Activated CD8-positive, alpha-beta memory T cell treated with anti-CD3 and anti-CD28 coated beads, Interleukin-2, amount 10 ng/mL, durations not matched to agents 7 days and 5 days (primary cell): ENCODE measurements at regions of chr12 and their contacts with region 1.

Region 1: DNA sequence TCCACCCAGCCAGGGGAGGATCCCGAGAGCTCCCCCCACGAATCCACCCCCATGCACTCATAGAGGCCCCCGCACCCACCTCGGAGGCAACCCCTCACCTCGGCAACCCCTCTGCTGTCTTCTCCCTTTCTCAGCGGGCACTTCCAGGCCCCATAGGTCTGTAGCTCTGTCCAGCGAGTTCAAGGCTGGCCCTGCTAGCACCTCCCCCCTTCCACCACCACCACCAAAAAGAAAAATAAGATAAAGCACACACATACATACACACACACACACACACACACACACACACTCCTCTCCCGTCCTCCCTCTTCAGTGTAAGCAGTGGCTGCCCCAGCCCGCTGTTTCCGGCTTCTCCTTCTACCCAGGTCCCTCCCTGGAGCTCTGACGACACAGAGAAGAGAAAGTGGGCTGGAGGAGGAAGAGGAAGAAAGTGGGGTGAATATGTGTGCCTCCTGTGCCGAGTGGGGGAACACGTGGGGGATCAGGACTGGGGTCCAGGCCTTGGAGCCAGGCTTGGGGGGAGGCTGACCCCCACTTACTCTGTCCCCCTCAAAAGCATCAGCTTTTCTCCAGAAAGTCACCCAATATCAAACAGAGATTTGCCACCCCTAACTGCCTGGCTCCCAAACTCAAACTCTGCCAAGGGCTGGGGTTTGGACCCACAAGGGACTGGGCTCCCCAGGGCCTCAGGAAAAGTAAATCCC is at the start of gene STAT6:
- DNase-seq: peak; percentile 95
- ATAC-seq: peak; percentile 76
- H3K4me3 Mint-ChIP-seq: peak within 1 kb of the TSS; percentile 95
- H3K27ac Mint-ChIP-seq: peak within 1 kb of the TSS; percentile 96
- H3K4me1 Mint-ChIP-seq: peaks cover 29% of the 10 kb centered on the region
- H3K27me3 Mint-ChIP-seq: no peaks in the 10 kb centered on the region
- total RNA-seq, gene STAT6: 99.1 to 104 TPM

Region 2: DNA sequence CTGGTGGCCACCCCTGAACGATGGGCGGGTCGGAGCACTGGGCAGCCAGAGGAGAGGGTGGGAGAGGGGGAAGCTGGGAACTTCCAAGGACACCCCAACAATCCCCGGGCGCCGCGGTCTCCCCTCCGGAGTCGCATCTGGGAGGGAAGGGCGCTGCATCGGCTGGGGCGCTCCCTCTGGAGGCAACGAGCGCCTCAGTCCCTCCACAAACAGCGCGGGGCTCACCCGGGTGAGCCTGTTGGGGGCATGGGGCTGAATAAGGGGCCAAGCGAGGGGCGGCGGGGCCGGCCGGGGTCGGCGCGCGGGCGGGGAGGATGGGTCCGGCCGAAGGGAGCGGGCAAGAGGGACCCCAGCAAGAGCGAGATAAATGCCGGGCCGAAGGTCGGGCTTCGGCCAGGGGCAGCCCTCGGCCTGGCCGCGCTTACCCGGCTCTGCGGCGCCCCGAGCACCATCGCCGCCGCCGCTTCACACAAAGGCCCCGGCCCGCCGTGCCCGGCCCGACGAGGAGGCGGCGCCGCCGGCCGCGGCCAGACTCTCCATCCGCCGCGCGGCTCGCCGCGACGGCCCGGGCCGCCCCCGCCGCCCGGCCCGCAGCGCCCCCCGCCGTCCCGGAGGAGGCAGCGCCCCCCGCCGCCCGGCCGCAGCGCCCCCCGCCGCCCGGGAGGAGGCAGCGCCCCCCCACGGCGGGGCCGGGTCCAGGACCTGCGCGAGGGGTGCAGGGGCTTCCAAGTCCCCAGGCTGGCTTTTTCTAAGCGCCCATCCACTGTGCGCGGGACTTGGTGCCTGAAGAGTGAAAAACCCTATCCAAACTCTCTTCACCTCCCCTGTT is 105.0 kb before region 1 on chr12 and contains the start of gene ZBTB39:
- CTCF ChIA-PET with region 1: interaction called, 86 read pairs
- DNase-seq: peak; percentile 70
- ATAC-seq: peak; percentile 82
- H3K4me3 Mint-ChIP-seq: peak within 1 kb of the TSS; percentile 81
- H3K27ac Mint-ChIP-seq: peak within 1 kb of the TSS; percentile 82
- H3K4me1 Mint-ChIP-seq: peaks cover 34% of the 10 kb centered on the region
- H3K27me3 Mint-ChIP-seq: no peaks in the 10 kb centered on the region
- total RNA-seq, gene ZBTB39: 8.8 to 9.3 TPM

Region 3: DNA sequence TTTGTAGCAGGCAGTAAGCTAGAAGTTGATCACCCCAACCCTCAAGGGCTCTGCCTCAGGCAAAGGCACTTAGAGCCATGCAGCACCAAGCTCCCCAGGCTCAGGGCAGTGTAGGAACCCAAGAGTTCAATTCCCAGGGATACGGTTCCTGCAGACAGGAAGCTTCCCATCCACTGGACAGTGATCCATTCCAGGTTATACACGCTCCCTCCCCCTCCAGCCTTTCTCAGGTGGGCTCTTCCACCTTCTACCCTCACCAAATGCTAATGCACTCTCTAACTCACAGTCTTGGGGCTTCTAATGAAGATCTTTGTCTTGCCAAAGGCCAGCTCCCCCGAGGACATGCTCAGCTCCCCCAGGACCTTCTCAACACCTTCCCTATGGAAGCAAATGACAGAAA is 73.9 kb before region 1 on chr12:
- CTCF ChIA-PET with region 1: interaction called, 34 read pairs
- DNase-seq: no peak
- ATAC-seq: no peak
- H3K4me3 Mint-ChIP-seq: no peak overlapping the region
- H3K27ac Mint-ChIP-seq: no peak overlapping the region
- H3K4me1 Mint-ChIP-seq: no peaks in the 10 kb centered on the region
- H3K27me3 Mint-ChIP-seq: peaks cover 3% of the 10 kb centered on the region

Region 4: DNA sequence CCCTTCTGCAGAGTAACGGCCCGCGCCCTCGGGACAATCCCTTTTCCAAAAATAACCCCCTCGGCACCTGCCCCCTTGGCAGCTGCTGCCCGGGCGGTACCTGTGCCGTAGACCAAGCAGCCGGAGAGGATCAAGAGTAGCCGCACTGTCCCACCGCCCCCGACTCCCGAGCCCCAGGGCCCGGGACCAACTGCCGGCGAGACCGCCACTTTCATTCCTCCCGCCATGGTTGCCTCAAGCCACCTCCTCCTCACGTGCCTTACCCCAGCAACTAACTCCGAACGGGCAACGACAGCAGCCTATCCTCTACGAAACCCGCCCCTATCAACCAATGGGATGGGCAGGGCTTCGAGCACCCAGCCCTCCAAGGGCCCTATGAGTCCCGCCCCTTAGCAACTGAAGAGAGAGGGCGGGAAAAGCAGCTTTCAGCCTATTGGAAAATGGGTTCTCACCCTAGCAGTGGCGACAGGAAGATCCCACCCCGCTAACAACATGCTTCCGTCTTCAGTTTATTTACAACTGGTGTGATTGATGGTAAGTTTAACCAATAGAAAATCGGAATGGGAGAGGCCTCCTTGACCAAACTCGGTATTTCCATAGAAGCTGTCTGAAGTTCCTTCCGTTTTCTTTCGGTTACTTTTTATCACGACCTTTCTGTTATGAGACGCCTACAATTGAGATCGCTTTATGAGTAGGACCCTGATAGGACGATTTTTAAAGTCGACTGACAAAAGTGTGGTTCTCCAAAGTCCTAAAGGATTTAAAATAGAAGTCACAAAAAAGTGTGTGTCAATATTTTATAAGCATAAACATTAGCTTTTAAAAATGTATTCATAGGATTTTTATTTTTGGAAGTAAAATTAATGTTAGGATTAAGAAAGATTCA is 32.4 kb before region 1 on chr12 and contains the start of gene NEMP1:
- CTCF ChIA-PET with region 1: interaction called, 263 read pairs
- DNase-seq: peak; percentile 99
- ATAC-seq: peak; percentile 96
- H3K4me3 Mint-ChIP-seq: peak within 1 kb of the TSS; percentile 92
- H3K27ac Mint-ChIP-seq: peak within 1 kb of the TSS; percentile 100
- H3K4me1 Mint-ChIP-seq: peaks cover 29% of the 10 kb centered on the region
- H3K27me3 Mint-ChIP-seq: no peaks in the 10 kb centered on the region
- total RNA-seq, gene NEMP1: 60.5 to 66.1 TPM

Region 5: GRCh38 chr12:57182921-57183790 is 72.0 kb after region 1 on chr12:
- CTCF ChIA-PET with region 1: interaction called, 22 read pairs
- DNase-seq: peak; percentile 84
- ATAC-seq: peak; percentile 97
- H3K4me3 Mint-ChIP-seq: no peak overlapping the region
- H3K27ac Mint-ChIP-seq: no peak overlapping the region
- H3K4me1 Mint-ChIP-seq: peaks cover 2% of the 10 kb centered on the region
- H3K27me3 Mint-ChIP-seq: no peaks in the 10 kb centered on the region

Region 6: DNA sequence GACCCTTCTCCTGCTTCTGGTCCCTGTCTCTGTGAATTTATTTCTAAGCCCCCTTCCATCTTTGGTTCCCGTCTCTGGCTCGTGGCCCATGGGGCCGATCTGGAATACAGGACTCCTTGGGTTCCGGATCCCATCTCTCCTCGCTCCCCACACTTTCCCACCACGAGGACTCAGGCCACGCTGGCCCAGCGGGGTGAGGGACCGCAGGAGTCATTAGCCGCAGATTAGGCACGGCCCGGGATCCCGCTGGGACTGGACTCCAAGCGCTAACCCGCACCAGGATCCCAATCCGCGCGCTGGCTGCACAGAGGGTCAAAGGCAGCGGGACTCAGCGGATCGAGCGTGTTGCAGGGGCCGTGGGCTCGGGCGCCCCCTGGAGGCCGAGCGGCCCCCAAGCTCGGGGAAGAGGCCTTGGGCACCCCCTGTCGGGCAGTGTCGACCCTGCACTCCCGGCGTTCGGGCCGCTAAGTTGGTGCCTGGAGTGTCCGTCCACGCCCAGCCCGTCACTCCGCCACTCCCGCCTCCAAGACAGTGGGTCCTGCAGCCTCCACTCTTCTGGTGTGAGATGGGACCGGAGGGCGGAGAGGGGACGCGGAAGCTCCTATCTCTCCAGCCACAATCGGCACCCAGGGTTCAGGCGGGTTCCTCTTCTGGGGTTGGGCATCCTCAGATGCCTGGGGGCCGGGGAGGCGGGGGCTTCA is 127.8 kb after region 1 on chr12:
- CTCF ChIA-PET with region 1: interaction called, 19 read pairs
- DNase-seq: peak; percentile 92
- ATAC-seq: peak; percentile 71
- H3K4me3 Mint-ChIP-seq: peak overlapping the region; percentile 84
- H3K27ac Mint-ChIP-seq: peak overlapping the region; percentile 79
- H3K4me1 Mint-ChIP-seq: peaks cover 50% of the 10 kb centered on the region
- H3K27me3 Mint-ChIP-seq: peaks cover 52% of the 10 kb centered on the region